Mammary epithelial cell (primary cell): ENCODE measurements at regions of chr17 and their contacts with region 1.

Region 1: GRCh38 chr17:63490321-63490720 is 13.5 kb downstream of the ACE start:
- DNase-seq: no peak
- H3K4me3 ChIP-seq: no peak overlapping the region
- H3K27ac ChIP-seq: no peak overlapping the region
- H3K4me1 ChIP-seq: no peaks in the 10 kb centered on the region
- H3K27me3 ChIP-seq: no peaks in the 10 kb centered on the region
- CTCF ChIP-seq: no peak

Region 2: DNA sequence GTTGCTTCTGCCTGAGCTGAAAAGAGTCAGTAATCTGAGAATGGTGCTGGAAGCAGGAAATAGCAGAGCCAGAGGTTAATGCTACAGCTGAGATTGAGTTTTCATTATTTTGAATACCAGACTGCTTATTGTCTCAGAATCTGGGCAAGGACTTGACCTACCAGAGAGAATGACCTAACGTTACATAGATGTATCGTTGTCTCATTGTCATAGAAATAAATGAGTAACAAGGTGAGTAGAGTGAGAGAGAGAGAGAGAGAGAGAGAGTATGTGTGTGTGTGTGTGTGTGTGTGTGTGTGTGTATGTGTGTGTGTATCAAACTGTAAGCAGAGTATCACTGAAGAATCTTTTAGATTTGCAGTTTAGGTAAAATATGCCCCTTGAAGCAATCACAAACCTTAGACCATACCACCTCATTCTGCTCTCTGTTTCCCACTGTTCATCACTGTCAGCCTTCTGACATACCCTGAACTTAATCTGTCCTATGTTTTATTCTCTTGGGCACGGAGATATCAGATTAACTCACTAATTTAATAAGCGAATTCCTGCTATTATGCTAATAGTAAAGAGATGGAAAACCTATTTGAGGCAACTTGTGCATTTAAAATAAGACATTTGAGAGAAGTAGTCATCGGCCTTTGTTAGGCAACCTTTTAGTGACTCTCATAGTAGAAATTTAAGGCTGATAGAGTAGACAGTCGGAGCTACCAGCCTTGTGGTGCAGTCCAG is 132.0 kb before region 1 on chr17:
- CTCF ChIA-PET with region 1: no interaction called
- dilution Hi-C with region 1: no loop called
- in situ Hi-C with region 1: no loop called
- intact Hi-C with region 1: no loop called
- DNase-seq: peak; percentile 82
- H3K4me3 ChIP-seq: no peak overlapping the region
- H3K27ac ChIP-seq: no peak overlapping the region
- H3K4me1 ChIP-seq: peaks cover 14% of the 10 kb centered on the region
- H3K27me3 ChIP-seq: no peaks in the 10 kb centered on the region
- CTCF ChIP-seq: no peak

Region 3: DNA sequence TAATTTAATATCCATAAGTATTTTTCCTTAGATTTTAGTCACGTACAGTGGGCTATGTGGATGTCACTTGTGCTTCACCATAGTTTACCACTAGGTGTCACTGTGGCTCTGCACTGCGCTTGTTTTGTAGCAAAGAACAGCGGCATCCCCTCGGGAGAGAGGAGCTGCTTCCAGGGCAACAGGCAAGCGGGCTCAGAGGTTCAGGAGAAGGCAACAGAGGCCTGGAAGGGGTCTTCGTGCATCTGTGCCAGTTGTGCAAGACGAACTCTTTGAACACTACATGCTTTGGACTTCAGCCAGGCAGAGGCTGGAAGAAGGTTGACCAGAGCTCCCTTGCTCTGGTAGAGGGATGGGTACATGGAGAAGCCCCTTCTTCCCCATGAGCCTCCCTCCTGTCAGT is 64.8 kb before region 1 on chr17:
- CTCF ChIA-PET with region 1: no interaction called
- dilution Hi-C with region 1: loop called (anchors 5 kb)
- in situ Hi-C with region 1: no loop called
- intact Hi-C with region 1: no loop called
- DNase-seq: peak; percentile 58
- H3K4me3 ChIP-seq: no peak overlapping the region
- H3K27ac ChIP-seq: no peak overlapping the region
- H3K4me1 ChIP-seq: peaks cover 18% of the 10 kb centered on the region
- H3K27me3 ChIP-seq: no peaks in the 10 kb centered on the region
- CTCF ChIP-seq: peak; percentile 88 to 98